ENCODE measurements at regions of chr5 and their contacts with region 1.

Region 1: GRCh38 chr5:52948418-52949076 is 40.6 kb upstream of the ITGA2 start:
- DNase-seq: peak; percentile 58
- H3K4me3 ChIP-seq: peak overlapping the region in 1 of 2 experiments; percentile 6; a peak in 1 of 4 replicates
- H3K27ac ChIP-seq: peak overlapping the region; percentile 73 to 81
- H3K4me1 ChIP-seq: peaks cover 26 to 27% of the 10 kb centered on the region in 2 experiments
- H3K27me3 ChIP-seq: no peaks in the 10 kb centered on the region
- CTCF ChIP-seq: peak; percentile 88
- EP300 ChIP-seq: peak in 1 of 2 experiments; percentile 46; a peak in 1 of 4 replicates
- RAD21 ChIP-seq: peak; percentile 96

Region 2: GRCh38 chr5:52915176-52915875 is 33.2 kb before region 1 on chr5:
- CTCF ChIA-PET with region 1: interaction called, 10 read pairs
- POLR2A ChIA-PET with region 1: no interaction called
- DNase-seq: peak; percentile 65
- H3K4me3 ChIP-seq: peak overlapping the region; percentile 40 to 57; a peak in 3 of 4 replicates
- H3K27ac ChIP-seq: peak overlapping the region in 1 of 2 experiments; percentile 69; a peak in 3 of 4 replicates
- H3K4me1 ChIP-seq: peaks cover 0 to 2% of the 10 kb centered on the region in 2 experiments; a peak in 1 of 4 replicates
- H3K27me3 ChIP-seq: no peaks in the 10 kb centered on the region
- CTCF ChIP-seq: peak; percentile 91
- EP300 ChIP-seq: no peak
- RAD21 ChIP-seq: peak; percentile 78

Region 3: DNA sequence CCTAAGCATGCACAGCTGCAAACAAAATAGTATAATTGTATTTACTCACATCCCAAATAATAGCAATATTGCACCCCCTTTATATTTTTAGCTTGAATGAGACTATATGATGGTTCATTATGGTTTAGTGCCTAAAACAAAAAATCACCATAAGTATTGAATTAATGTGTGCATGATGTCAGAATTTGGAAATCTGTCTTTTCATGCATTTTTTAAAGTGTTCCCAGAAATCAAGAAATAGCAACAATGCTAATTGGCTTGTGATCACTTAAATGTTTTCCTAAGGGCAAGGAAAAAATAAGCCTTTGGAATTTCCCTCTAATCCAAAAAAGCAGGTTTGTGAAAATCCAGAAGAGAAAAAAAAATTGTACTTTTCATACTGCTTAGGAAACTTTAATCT is 10.3 kb before region 1 on chr5:
- CTCF ChIA-PET with region 1: interaction called, 10 read pairs
- POLR2A ChIA-PET with region 1: no interaction called
- DNase-seq: no peak
- H3K4me3 ChIP-seq: no peak overlapping the region
- H3K27ac ChIP-seq: no peak overlapping the region
- H3K4me1 ChIP-seq: no peaks in the 10 kb centered on the region; a peak in 1 of 4 replicates
- H3K27me3 ChIP-seq: no peaks in the 10 kb centered on the region
- CTCF ChIP-seq: no peak
- EP300 ChIP-seq: no peak
- RAD21 ChIP-seq: no peak

Region 4: DNA sequence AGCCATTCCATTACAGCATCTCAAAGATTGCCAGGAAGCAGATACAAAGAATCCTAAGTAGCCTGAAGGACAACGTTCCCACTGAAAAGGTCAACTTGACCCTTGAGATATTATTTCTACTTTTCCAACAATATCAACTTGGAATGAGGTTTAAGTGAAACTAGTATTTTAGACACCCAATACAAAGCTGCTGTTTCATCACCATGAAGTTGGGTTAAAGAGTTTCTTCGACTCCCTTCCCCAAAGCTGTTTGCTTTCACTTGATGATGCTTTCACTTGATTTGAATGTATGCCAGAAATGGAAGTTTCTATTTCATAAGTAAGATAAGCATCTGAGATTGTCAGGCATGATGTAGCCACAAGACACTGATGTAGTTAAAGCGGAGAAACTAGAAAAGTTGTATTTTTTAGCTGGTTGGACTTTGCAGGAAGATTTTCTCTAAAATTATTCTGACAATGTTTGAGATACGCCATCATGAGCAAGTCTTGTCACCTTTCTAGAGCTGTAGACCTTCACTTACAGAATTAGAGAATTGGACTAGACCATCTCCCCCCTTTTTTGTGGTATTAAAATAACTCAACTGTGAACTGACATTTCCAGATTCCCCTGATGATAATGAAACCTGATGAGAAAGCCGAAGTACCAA is 140.9 kb after region 1 on chr5:
- CTCF ChIA-PET with region 1: interaction called, 79 read pairs
- POLR2A ChIA-PET with region 1: no interaction called
- DNase-seq: no peak
- H3K4me3 ChIP-seq: no peak overlapping the region
- H3K27ac ChIP-seq: peak overlapping the region; percentile 43 to 55; a peak in 2 of 4 replicates
- H3K4me1 ChIP-seq: peaks cover 0 to 25% of the 10 kb centered on the region in 2 experiments; a peak in 2 of 4 replicates
- H3K27me3 ChIP-seq: no peaks in the 10 kb centered on the region
- CTCF ChIP-seq: no peak
- EP300 ChIP-seq: no peak
- RAD21 ChIP-seq: no peak

Region 5: DNA sequence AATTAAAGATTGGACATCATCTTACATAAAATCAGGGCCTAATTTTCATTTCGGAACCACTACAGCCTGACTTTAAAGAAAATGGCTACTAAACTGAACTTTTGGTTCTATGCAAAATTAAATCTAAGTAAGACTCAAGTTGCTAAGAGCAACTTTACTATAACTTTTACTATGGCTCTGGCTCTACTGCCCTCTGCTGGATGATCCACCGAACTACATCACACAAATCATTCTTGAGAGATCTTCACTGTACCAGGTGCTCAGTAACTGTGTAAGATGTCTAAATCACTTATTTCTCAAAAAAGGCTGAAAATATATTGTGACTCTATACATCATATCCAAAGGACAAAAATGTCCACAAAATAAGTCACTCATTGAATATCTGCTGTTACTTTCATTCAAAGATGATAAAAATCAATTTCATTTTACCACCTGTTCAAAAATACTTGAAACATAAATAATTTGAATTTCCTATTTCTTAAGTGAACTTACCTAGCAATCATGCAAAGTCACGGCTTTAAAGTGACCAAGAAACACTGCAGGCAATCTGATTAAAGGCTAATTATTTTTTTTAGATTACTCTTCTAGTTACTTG is 147.5 kb after region 1 on chr5:
- CTCF ChIA-PET with region 1: interaction called, 79 read pairs
- POLR2A ChIA-PET with region 1: no interaction called
- DNase-seq: peak; percentile 37
- H3K4me3 ChIP-seq: peak overlapping the region in 1 of 2 experiments; percentile 10; a peak in 1 of 4 replicates
- H3K27ac ChIP-seq: peak overlapping the region in 1 of 2 experiments; percentile 35; a peak in 1 of 4 replicates
- H3K4me1 ChIP-seq: peaks cover 0 to 20% of the 10 kb centered on the region in 2 experiments; a peak in 3 of 4 replicates
- H3K27me3 ChIP-seq: no peaks in the 10 kb centered on the region
- CTCF ChIP-seq: peak; percentile 90
- EP300 ChIP-seq: no peak
- RAD21 ChIP-seq: peak; percentile 79

Measured in SK-N-SH (cell line).